CD4-positive, alpha-beta T cell (primary cell): ENCODE measurements at regions of chr6 and their contacts with region 1.

Region 1: GRCh38 chr6:26103770-26104456 is 16.7 kb downstream of the HFE start:
- DNase-seq: peak; percentile 84 to 96 (median 90)
- ATAC-seq: peak; percentile 88
- H3K4me3 ChIP-seq: peak overlapping the region; percentile 58
- H3K4me3 Mint-ChIP-seq: peak overlapping the region; percentile 94
- H3K27ac ChIP-seq: peak overlapping the region; percentile 83 to 85
- H3K27ac Mint-ChIP-seq: peak overlapping the region; percentile 99
- H3K4me1 ChIP-seq: peaks cover 16% of the 10 kb centered on the region
- H3K4me1 Mint-ChIP-seq: peaks cover 13% of the 10 kb centered on the region
- H3K27me3 ChIP-seq: no peaks in the 10 kb centered on the region
- H3K27me3 Mint-ChIP-seq: peaks cover 5% of the 10 kb centered on the region
- CTCF ChIP-seq: peak; percentile 58

Region 2: DNA sequence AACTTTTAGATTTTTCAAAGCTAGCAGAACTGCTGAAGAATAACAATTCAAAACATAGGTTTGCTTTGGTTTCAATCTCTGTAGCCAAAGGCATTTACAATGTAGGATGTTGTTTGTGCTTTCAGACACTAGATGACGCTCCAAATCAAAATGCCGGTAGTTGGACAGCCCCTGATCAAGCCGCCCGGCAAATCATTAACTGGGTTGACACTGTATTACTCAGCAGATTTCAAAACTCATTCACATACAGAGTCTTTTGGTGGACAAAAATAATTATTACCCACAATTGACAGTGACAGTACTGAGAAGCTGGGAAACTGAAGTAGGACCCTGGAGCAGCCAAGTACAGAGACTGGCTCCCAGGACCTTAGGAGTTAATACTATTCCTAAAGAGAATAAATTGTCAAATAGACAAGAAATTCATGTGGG is 37.9 kb before region 1 on chr6:
- CTCF ChIA-PET with region 1: interaction called, 5 read pairs
- POLR2A ChIA-PET with region 1: interaction called, 138 read pairs
- intact Hi-C with region 1: no loop called
- DNase-seq: peak in 11 of 14 experiments; percentile 14 to 87 (median 39)
- ATAC-seq: peak; percentile 93
- H3K4me3 ChIP-seq: no peak overlapping the region
- H3K4me3 Mint-ChIP-seq: no peak overlapping the region
- H3K27ac ChIP-seq: no peak overlapping the region
- H3K27ac Mint-ChIP-seq: no peak overlapping the region
- H3K4me1 ChIP-seq: peaks cover 3% of the 10 kb centered on the region
- H3K4me1 Mint-ChIP-seq: peaks cover 11% of the 10 kb centered on the region
- H3K27me3 ChIP-seq: no peaks in the 10 kb centered on the region
- H3K27me3 Mint-ChIP-seq: no peaks in the 10 kb centered on the region
- CTCF ChIP-seq: peak; percentile 85

Region 3: GRCh38 chr6:26115226-26115625 is 11.3 kb after region 1 on chr6:
- CTCF ChIA-PET with region 1: interaction called, 9 read pairs
- POLR2A ChIA-PET with region 1: interaction called, 23 read pairs
- intact Hi-C with region 1: no loop called
- DNase-seq: no peak
- ATAC-seq: no peak
- H3K4me3 ChIP-seq: no peak overlapping the region
- H3K4me3 Mint-ChIP-seq: no peak overlapping the region
- H3K27ac ChIP-seq: no peak overlapping the region
- H3K27ac Mint-ChIP-seq: no peak overlapping the region
- H3K4me1 ChIP-seq: no peaks in the 10 kb centered on the region
- H3K4me1 Mint-ChIP-seq: peaks cover 8% of the 10 kb centered on the region
- H3K27me3 ChIP-seq: no peaks in the 10 kb centered on the region
- H3K27me3 Mint-ChIP-seq: no peaks in the 10 kb centered on the region
- CTCF ChIP-seq: no peak

Region 4: GRCh38 chr6:26175428-26176181 is 71.7 kb after region 1 on chr6:
- CTCF ChIA-PET with region 1: interaction called, 3 read pairs
- POLR2A ChIA-PET with region 1: interaction called, 24 read pairs
- intact Hi-C with region 1: loop called in 1 of 2 experiments (anchors 1 kb)
- DNase-seq: peak in 11 of 14 experiments; percentile 13 to 85 (median 54)
- ATAC-seq: no peak
- H3K4me3 ChIP-seq: no peak overlapping the region
- H3K4me3 Mint-ChIP-seq: peak overlapping the region; percentile 83
- H3K27ac ChIP-seq: peak overlapping the region in 1 of 2 donors; percentile 41
- H3K27ac Mint-ChIP-seq: peak overlapping the region; percentile 93
- H3K4me1 ChIP-seq: peaks cover 17% of the 10 kb centered on the region
- H3K4me1 Mint-ChIP-seq: peaks cover 53% of the 10 kb centered on the region
- H3K27me3 ChIP-seq: no peaks in the 10 kb centered on the region
- H3K27me3 Mint-ChIP-seq: no peaks in the 10 kb centered on the region
- CTCF ChIP-seq: peak; percentile 87

Region 5: DNA sequence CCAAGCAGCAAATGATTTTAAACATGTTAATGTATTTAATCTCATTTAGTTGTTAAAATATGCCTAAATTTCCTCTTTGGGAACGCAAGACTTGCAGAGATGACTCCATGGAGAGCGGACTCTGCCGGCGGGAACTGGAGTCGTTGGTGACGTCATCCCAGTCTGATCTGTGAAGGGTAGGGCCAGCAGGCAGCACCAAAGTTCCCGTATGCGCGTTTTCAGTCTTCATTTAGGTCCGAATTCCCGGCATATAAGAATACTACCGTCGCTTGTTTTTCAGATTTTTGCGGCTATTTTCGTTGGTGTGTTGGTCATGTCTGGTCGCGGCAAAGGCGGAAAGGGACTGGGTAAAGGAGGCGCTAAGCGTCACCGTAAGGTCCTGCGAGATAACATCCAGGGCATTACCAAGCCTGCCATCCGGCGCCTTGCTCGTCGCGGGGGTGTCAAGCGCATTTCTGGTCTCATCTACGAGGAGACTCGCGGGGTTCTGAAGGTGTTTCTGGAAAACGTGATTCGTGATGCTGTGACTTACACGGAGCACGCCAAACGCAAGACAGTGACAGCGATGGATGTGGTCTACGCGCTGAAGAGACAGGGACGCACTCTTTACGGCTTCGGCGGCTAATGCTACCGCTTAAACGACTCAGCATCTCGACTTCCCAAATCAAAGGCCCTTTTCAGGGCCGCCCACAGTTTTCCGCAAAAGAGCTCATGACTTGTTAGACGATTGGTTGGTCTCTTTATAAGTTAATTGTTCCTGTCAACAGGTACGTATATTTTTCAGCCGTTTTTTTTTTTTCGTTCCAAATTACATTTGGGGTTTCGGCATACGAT is 100.6 kb after region 1 on chr6:
- CTCF ChIA-PET with region 1: interaction called, 11 read pairs
- POLR2A ChIA-PET with region 1: interaction called, 90 read pairs
- intact Hi-C with region 1: loop called in 1 of 2 experiments (anchors 5 kb)
- DNase-seq: peak; percentile 73 to 98 (median 80)
- ATAC-seq: peak; percentile 69
- H3K4me3 ChIP-seq: peak overlapping the region; percentile 68
- H3K4me3 Mint-ChIP-seq: no peak overlapping the region
- H3K27ac ChIP-seq: peak overlapping the region; percentile 89 to 90
- H3K27ac Mint-ChIP-seq: no peak overlapping the region
- H3K4me1 ChIP-seq: peaks cover 34% of the 10 kb centered on the region
- H3K4me1 Mint-ChIP-seq: peaks cover 8% of the 10 kb centered on the region
- H3K27me3 ChIP-seq: no peaks in the 10 kb centered on the region
- H3K27me3 Mint-ChIP-seq: no peaks in the 10 kb centered on the region
- CTCF ChIP-seq: peak; percentile 32